Panc1 (cell line): ENCODE measurements at regions of chr9 and their contacts with region 1.

Region 1: GRCh38 chr9:128275996-128276573 is at the starts of genes GOLGA2 and SWI5:
- DNase-seq: peak; percentile 94
- ATAC-seq: peak; percentile 99
- H3K4me3 ChIP-seq: peak within 1 kb of the TSS; percentile 90 to 91
- H3K27ac ChIP-seq: peak within 1 kb of the TSS; percentile 88
- H3K4me1 ChIP-seq: no peaks in the 10 kb centered on the region
- H3K27me3 ChIP-seq: no peaks in the 10 kb centered on the region
- CTCF ChIP-seq: no peak
- total RNA-seq, gene GOLGA2: 69.6 TPM
- total RNA-seq, gene SWI5: 28.3 TPM

Region 2: GRCh38 chr9:128304149-128304974 is 28.3 kb after region 1 on chr9:
- CTCF ChIA-PET with region 1: interaction called, 7 read pairs
- POLR2A ChIA-PET with region 1: interaction called, 10 read pairs
- in situ Hi-C with region 1: no loop called
- intact Hi-C with region 1: no loop called
- DNase-seq: no peak
- ATAC-seq: no peak
- H3K4me3 ChIP-seq: no peak overlapping the region
- H3K27ac ChIP-seq: no peak overlapping the region
- H3K4me1 ChIP-seq: no peaks in the 10 kb centered on the region
- H3K27me3 ChIP-seq: no peaks in the 10 kb centered on the region
- CTCF ChIP-seq: no peak